A549 (cell line): ENCODE measurements at regions of chr22 and their contacts with region 1.

Region 1: DNA sequence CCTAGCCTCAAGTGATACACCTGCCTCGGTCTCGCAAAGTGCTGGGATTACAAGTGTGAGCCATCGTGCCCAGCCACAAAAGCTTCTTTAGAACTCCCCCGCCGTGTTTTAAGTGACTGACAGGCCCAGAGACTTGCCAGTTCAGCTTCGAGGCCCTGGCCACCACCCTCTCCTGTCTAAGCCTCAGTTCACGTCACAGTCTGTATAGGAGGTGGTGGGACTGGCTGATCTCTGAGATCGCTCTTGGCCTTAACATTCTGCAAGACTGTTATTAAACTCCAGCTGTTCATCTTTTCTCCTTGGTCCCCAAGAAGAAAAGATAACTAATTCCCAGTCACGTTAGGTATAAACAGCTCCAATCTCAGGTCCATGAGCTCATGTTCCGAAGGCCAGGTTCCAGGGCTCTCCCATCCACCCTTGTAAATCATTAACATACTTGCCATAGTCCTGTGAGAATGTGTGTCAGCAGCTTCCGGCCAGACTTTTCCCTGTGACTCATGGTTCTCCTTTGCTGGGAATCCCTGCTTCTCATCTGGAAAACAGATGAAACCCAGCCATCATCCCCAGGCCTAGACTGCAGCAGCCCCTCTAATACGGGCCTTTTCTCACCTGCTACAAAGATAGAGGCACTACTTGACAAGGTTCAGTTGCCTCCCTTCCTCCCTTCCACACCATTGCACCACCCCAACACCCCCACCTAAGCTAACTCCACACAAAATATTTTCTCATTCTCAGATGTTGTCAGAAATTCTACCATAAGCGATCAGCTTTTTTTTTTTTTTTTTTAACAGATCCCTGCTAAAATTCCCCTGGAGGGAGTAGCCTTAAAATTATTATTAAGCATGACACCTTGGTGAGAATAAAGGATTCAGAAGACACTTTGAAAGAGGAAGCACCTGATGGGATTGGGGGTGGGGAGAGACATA is 5.6 kb upstream of the KIAA0930 start:
- DNase-seq: peak; percentile 88 to 97
- ATAC-seq: peak; percentile 90 to 93
- H3K4me3 ChIP-seq: peak overlapping the region; percentile 30; the same call in 1 of the 3 replicates
- H3K27ac ChIP-seq: peak overlapping the region; percentile 93 to 100
- H3K4me1 ChIP-seq: peaks cover 58% of the 10 kb centered on the region
- CTCF ChIP-seq: no peak
- EP300 ChIP-seq: no peak; a peak in 1 of 5 replicates
- POLR2A ChIP-seq: no peak
- RAD21 ChIP-seq: no peak

Region 2: GRCh38 chr22:45091254-45091854 is 155.0 kb before region 1 on chr22:
- CTCF ChIA-PET with region 1: no interaction called
- POLR2A ChIA-PET with region 1: interaction called, 10 read pairs
- DNase-seq: no peak
- ATAC-seq: no peak
- H3K4me3 ChIP-seq: no peak overlapping the region
- H3K27ac ChIP-seq: no peak overlapping the region
- H3K4me1 ChIP-seq: 0 out of 3 replicates have a peak, but pooled peaks cover 4% of the 10 kb centered on the region
- CTCF ChIP-seq: no peak
- EP300 ChIP-seq: no peak
- POLR2A ChIP-seq: no peak
- RAD21 ChIP-seq: no peak

Region 3: GRCh38 chr22:45163451-45164269 is 82.7 kb before region 1 on chr22 and contains the start of gene NUP50:
- CTCF ChIA-PET with region 1: no interaction called
- POLR2A ChIA-PET with region 1: interaction called, 11 read pairs
- DNase-seq: peak; percentile 85 to 94
- ATAC-seq: peak; percentile 76 to 86
- H3K4me3 ChIP-seq: peak within 1 kb of the TSS; percentile 74
- H3K27ac ChIP-seq: peak within 1 kb of the TSS; percentile 93 to 97
- H3K4me1 ChIP-seq: peaks cover 45% of the 10 kb centered on the region
- CTCF ChIP-seq: no peak
- EP300 ChIP-seq: no peak
- POLR2A ChIP-seq: peak; percentile 57
- RAD21 ChIP-seq: no peak
- polyA plus RNA-seq, gene NUP50: 16.7 and 21.1 TPM in 2 replicates